MCF 10A (cell line): ENCODE measurements at regions of chr12 and their contacts with region 1.

Region 1: GRCh38 chr12:110896559-110896958 is 23.8 kb downstream of the MYL2 start:
- DNase-seq: peak; percentile 88
- H3K4me3 Mint-ChIP-seq: no peak overlapping the region
- H3K27ac Mint-ChIP-seq: peak overlapping the region; percentile 22
- H3K4me1 Mint-ChIP-seq: peaks cover 16% of the 10 kb centered on the region
- H3K27me3 Mint-ChIP-seq: no peaks in the 10 kb centered on the region
- CTCF ChIP-seq: no peak

Region 2: DNA sequence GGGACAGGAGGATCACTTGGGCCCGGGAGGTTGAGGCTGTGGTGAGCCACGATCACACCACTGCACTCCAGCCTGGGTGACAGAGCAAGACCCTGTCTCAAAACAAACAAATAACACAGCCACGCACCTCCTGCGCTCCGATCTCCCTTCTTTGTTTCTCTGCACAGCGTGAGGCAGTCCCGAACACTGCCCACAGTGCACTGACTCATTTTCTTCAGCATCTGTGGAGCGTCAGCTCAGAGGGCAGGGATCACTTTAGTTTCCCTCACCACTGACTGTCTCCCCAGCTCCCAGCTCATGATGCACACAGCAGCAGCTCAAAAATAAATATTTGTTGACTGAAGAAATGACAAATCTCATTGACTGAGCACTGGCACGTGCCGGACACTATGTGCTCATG is 24.7 kb after region 1 on chr12:
- CTCF ChIA-PET with region 1: interaction called, 5 read pairs
- POLR2A ChIA-PET with region 1: interaction called, 22 read pairs
- intact Hi-C with region 1: no loop called
- DNase-seq: peak; percentile 36
- H3K4me3 Mint-ChIP-seq: no peak overlapping the region
- H3K27ac Mint-ChIP-seq: no peak overlapping the region
- H3K4me1 Mint-ChIP-seq: peaks cover 26% of the 10 kb centered on the region
- H3K27me3 Mint-ChIP-seq: no peaks in the 10 kb centered on the region
- CTCF ChIP-seq: no peak

Region 3: GRCh38 chr12:110937104-110937641 is 40.6 kb after region 1 on chr12:
- CTCF ChIA-PET with region 1: interaction called, 12 read pairs
- POLR2A ChIA-PET with region 1: interaction called, 14 read pairs
- intact Hi-C with region 1: loop called (anchors 1 kb)
- DNase-seq: peak; percentile 61
- H3K4me3 Mint-ChIP-seq: no peak overlapping the region
- H3K27ac Mint-ChIP-seq: no peak overlapping the region
- H3K4me1 Mint-ChIP-seq: peaks cover 17% of the 10 kb centered on the region
- H3K27me3 Mint-ChIP-seq: no peaks in the 10 kb centered on the region
- CTCF ChIP-seq: peak; percentile 99

Region 4: GRCh38 chr12:111174251-111174960 is 277.8 kb after region 1 on chr12:
- CTCF ChIA-PET with region 1: interaction called, 8 read pairs
- POLR2A ChIA-PET with region 1: no interaction called
- intact Hi-C with region 1: loop called (anchors 1 kb)
- DNase-seq: peak; percentile 27
- H3K4me3 Mint-ChIP-seq: no peak overlapping the region
- H3K27ac Mint-ChIP-seq: no peak overlapping the region
- H3K4me1 Mint-ChIP-seq: no peaks in the 10 kb centered on the region
- H3K27me3 Mint-ChIP-seq: peaks cover 64% of the 10 kb centered on the region
- CTCF ChIP-seq: no peak

Region 5: GRCh38 chr12:111298582-111299436 is 402.2 kb after region 1 on chr12:
- CTCF ChIA-PET with region 1: interaction called, 74 read pairs
- POLR2A ChIA-PET with region 1: no interaction called
- intact Hi-C with region 1: loop called (anchors 1 kb)
- DNase-seq: peak; percentile 63
- H3K4me3 Mint-ChIP-seq: no peak overlapping the region
- H3K27ac Mint-ChIP-seq: no peak overlapping the region
- H3K4me1 Mint-ChIP-seq: no peaks in the 10 kb centered on the region
- H3K27me3 Mint-ChIP-seq: no peaks in the 10 kb centered on the region
- CTCF ChIP-seq: peak; percentile 84